Common myeloid progenitor, CD34-positive (primary cell): ENCODE measurements at regions of chr10 and their contacts with region 1.

Region 1: GRCh38 chr10:43427166-43427825 is 9.6 kb upstream of the ZNF487 start:
- DNase-seq: peak in 1 of 3 donors; percentile 36
- H3K4me3 ChIP-seq: no peak overlapping the region
- H3K27ac ChIP-seq: no peak overlapping the region
- H3K4me1 ChIP-seq: peaks cover 0 to 6% (median 0%) of the 10 kb centered on the region in 4 experiments
- H3K27me3 ChIP-seq: no peaks in the 10 kb centered on the region

Region 2: DNA sequence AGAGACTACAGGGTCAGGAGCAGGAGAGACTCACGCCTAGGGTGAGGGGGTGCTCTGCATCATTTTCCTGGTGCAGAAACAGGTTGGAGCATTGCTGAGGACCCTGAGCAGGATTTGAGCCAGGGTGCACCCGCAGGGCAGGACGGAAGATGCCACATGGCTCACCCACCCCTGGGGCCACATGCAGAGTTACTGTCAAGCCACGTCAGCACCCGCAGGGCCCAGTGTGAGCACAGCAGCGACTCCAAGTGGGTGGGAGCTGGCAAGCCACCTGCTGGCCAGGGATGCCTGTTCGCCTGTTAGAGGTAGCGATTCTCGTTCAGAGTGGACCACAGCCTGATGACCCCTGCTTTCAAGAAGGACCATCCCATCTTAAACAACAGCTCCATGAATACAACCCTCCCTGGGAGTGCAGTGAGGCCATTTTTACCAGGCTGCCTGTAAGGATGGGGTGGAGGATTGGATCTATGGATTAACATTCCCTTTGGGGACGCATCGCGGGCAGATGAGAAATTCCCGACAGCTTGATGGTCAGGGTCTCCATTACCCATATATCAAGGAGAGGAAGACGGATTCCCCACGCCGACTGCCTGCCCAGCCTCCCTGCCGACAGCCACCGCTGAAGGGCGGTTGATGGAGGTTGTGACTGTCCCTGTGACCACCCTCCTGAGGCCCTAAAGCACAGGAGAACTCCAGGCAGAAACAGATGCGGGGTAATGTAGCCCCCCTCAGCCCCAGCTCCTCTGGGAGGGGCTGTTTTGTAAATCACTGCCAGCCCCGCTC is 451.5 kb before region 1 on chr10:
- CTCF ChIA-PET with region 1: no interaction called
- POLR2A ChIA-PET with region 1: no interaction called
- DNase-seq: no peak
- H3K4me3 ChIP-seq: no peak overlapping the region
- H3K27ac ChIP-seq: no peak overlapping the region
- H3K4me1 ChIP-seq: peaks cover 0 to 16% (median 7%) of the 10 kb centered on the region in 4 experiments
- H3K27me3 ChIP-seq: no peaks in the 10 kb centered on the region

Region 3: DNA sequence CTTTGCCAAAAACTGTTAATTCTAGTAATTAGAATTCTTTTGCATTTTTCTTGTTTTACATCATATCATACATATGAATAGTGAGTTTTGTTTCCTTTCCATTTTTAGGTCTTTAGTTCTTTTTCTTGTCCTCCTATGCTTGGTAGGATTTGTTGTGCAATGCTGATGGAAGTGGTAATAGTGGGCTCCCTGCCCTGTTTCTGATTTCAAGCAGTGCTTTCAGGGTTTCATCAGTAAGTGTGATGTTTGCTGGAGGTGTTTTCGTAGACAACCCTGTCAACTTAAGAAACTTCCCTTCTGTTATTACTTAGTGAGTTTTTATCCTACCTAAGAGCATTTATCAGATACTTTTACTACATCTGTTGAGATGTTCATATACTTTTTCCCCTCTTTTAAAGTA is 238.6 kb before region 1 on chr10:
- CTCF ChIA-PET with region 1: no interaction called
- POLR2A ChIA-PET with region 1: no interaction called
- DNase-seq: no peak
- H3K4me3 ChIP-seq: no peak overlapping the region
- H3K27ac ChIP-seq: no peak overlapping the region
- H3K4me1 ChIP-seq: no peaks in the 10 kb centered on the region
- H3K27me3 ChIP-seq: no peaks in the 10 kb centered on the region

Region 4: GRCh38 chr10:43396928-43397624 is 30.2 kb before region 1 on chr10:
- CTCF ChIA-PET with region 1: interaction called, 6 read pairs
- POLR2A ChIA-PET with region 1: interaction called, 10 read pairs
- DNase-seq: peak; percentile 70 to 82 (median 70)
- H3K4me3 ChIP-seq: peak overlapping the region; percentile 45 to 80 (median 74)
- H3K27ac ChIP-seq: peak overlapping the region; percentile 61 to 84
- H3K4me1 ChIP-seq: peaks cover 18 to 72% (median 62%) of the 10 kb centered on the region in 4 experiments
- H3K27me3 ChIP-seq: no peaks in the 10 kb centered on the region